CD4-positive, alpha-beta T cell (primary cell): ENCODE measurements at regions of chr14 and their contacts with region 1.

Region 1: DNA sequence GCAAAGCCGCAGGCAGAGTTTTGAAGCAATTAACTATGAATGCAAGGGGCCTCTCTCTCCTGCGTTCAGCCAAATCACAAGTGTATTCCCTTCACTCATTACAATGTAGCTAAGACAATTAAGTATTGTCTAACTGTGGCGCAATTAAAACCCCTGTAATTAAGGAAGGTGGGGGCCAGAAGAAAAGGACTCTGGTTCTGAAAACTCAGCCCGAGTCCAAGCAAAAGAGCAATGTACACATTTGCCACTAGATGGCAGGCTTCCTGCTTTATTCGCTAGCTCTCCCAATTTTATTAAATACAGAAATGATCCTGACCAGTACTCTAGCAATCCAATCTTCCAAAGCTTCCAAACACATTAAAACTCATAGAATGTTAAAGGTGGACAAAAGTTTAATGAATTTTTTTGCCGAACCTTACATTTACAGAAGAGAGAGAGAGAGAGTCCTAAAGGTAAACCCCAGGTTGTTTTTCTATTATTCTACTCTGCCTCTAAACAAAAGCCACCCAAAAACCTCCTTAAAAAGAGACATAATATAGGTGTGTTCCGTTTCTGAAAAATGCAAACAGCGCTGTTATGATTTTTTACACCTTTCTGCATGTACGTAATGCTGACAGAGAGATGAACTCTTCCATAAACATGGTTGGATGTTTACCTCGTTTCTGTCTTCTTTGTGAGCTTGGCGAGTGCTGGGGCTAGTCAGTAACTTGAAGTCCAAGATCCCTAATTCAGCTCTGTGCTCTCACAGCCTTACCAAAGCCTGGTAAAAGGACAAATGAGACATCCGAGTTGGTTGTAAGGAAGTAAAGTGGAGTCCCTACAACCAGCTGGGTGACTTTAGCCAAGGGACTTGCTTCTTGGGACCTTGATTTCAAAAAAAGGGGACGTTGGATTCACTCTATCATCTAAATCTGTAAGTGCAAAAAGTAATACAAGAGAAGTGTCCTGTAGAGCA is 50.9 kb upstream of the VASH1 start:
- DNase-seq: peak in 7 of 14 experiments; percentile 9 to 71 (median 42)
- ATAC-seq: peak; percentile 55
- H3K4me3 ChIP-seq: no peak overlapping the region
- H3K4me3 Mint-ChIP-seq: no peak overlapping the region
- H3K27ac ChIP-seq: no peak overlapping the region
- H3K27ac Mint-ChIP-seq: no peak overlapping the region
- H3K4me1 ChIP-seq: no peaks in the 10 kb centered on the region
- H3K4me1 Mint-ChIP-seq: no peaks in the 10 kb centered on the region
- H3K27me3 ChIP-seq: peaks cover 0 to 5% of the 10 kb centered on the region in 2 experiments
- H3K27me3 Mint-ChIP-seq: peaks cover 22% of the 10 kb centered on the region
- CTCF ChIP-seq: peak; percentile 89

Region 2: GRCh38 chr14:76736514-76736913 is 26.2 kb after region 1 on chr14:
- CTCF ChIA-PET with region 1: no interaction called
- POLR2A ChIA-PET with region 1: no interaction called
- intact Hi-C with region 1: no loop called
- DNase-seq: no peak
- ATAC-seq: no peak
- H3K4me3 ChIP-seq: no peak overlapping the region
- H3K4me3 Mint-ChIP-seq: no peak overlapping the region
- H3K27ac ChIP-seq: no peak overlapping the region
- H3K27ac Mint-ChIP-seq: no peak overlapping the region
- H3K4me1 ChIP-seq: no peaks in the 10 kb centered on the region
- H3K4me1 Mint-ChIP-seq: no peaks in the 10 kb centered on the region
- H3K27me3 ChIP-seq: no peaks in the 10 kb centered on the region
- H3K27me3 Mint-ChIP-seq: peaks cover 25% of the 10 kb centered on the region
- CTCF ChIP-seq: no peak

Region 3: DNA sequence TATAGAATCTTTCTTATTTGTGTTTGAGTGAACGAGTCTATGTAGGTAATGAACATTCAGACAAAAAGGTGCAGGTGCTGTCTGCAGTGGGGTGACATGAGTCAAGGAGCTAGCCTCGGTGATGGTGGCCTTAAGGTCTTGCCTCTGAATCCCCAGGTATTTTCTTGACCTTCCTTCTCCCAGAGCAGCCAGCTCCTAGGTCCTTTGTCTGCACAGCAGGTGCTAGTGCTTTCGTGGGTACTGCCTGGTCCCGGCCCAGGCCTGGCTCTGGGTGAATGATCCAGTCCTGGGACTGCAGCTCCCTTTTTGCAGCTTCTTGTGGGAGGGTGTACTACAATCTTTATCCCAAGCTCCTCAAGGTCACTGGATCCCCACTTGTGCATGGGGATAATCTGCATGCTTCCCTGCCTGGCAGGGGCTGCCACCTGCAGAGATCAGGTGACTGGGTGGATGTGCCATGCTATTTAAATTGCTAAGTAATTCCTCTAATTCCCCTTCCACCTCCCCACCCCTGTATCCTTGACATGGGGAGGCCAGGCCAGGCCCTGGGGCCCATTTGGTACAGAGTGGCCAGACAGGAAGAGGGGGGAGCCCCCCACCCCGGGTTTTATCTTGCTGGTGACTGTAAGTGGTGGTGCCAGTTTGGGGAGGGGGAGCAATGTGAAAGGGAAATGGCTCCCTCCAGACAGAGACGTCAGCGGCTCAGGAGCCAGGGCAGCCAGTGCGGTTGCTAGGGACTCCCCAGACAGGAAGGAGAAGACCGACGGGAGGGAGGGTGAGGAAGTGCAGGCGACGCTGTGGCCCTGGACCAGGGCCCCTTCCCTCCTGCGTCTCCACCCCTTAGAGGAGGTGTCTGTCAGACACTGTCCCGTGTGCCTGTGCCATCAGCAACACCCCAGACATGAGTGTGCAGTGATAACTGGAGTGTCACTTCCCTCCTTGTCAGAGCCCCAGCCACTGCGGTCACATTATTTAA is 57.6 kb after region 1 on chr14:
- CTCF ChIA-PET with region 1: interaction called, 4 read pairs
- POLR2A ChIA-PET with region 1: no interaction called
- intact Hi-C with region 1: loop called in 1 of 2 experiments (anchors 5 kb)
- DNase-seq: peak; percentile 37 to 98 (median 68)
- ATAC-seq: peak; percentile 96
- H3K4me3 ChIP-seq: peak overlapping the region; percentile 5
- H3K4me3 Mint-ChIP-seq: peak overlapping the region; percentile 43
- H3K27ac ChIP-seq: peak overlapping the region; percentile 70 to 78
- H3K27ac Mint-ChIP-seq: peak overlapping the region; percentile 94
- H3K4me1 ChIP-seq: peaks cover 38% of the 10 kb centered on the region
- H3K4me1 Mint-ChIP-seq: peaks cover 24% of the 10 kb centered on the region
- H3K27me3 ChIP-seq: peaks cover 0 to 2% of the 10 kb centered on the region in 2 experiments
- H3K27me3 Mint-ChIP-seq: no peaks in the 10 kb centered on the region
- CTCF ChIP-seq: no peak

Region 4: DNA sequence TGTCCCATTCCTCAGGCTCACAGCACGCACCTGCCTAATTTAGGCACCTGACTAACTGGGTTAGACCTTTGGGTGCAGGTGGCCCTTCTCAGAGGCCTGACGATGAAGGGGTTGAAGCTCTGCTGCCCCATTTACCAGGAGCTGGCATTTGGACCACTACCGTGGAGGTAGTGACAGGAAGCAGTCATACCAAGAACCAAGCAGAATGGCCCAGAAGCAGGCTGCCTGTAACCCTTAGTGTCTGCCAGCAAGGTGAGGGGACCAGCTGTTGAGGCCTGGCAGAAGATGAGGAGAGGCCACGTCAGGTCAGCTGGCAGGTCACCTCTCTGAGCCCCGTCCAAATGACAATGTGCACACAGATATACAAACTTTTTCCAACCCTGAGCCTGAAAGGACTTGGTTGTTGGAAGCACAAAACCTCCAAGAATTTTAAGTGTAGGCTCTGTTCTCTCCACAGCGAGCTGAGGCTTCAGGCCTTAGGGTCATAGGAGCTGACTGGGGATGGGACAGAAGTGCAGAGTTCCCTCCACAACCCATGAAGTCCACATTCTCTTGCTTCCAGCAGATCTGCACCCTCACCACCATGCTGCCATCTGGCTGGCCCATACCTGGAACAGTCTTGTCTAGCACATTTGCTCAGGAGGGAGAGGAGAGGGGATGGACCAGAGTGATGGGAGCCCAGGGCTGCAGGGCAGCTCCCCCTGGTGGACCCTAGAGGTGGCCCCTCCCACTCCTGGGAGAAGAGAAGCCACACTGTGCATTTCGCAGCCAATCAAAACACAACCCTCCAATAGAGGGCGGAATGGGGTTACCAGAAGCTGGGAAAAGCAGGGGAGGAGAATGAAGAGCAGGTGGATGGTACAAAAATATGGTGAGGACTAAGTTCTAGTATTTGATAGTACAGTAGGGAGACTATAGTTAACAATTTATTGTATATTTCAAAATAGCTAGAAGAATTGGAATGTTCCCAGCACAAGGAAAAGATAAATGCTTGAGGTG is 74.2 kb after region 1 on chr14:
- CTCF ChIA-PET with region 1: interaction called, 30 read pairs
- POLR2A ChIA-PET with region 1: no interaction called
- intact Hi-C with region 1: loop called (anchors 1 kb)
- DNase-seq: peak; percentile 33 to 86 (median 52)
- ATAC-seq: peak; percentile 97
- H3K4me3 ChIP-seq: no peak overlapping the region
- H3K4me3 Mint-ChIP-seq: no peak overlapping the region
- H3K27ac ChIP-seq: no peak overlapping the region
- H3K27ac Mint-ChIP-seq: peak overlapping the region; percentile 59
- H3K4me1 ChIP-seq: peaks cover 33% of the 10 kb centered on the region
- H3K4me1 Mint-ChIP-seq: peaks cover 23% of the 10 kb centered on the region
- H3K27me3 ChIP-seq: no peaks in the 10 kb centered on the region
- H3K27me3 Mint-ChIP-seq: no peaks in the 10 kb centered on the region
- CTCF ChIP-seq: peak; percentile 71

Region 5: DNA sequence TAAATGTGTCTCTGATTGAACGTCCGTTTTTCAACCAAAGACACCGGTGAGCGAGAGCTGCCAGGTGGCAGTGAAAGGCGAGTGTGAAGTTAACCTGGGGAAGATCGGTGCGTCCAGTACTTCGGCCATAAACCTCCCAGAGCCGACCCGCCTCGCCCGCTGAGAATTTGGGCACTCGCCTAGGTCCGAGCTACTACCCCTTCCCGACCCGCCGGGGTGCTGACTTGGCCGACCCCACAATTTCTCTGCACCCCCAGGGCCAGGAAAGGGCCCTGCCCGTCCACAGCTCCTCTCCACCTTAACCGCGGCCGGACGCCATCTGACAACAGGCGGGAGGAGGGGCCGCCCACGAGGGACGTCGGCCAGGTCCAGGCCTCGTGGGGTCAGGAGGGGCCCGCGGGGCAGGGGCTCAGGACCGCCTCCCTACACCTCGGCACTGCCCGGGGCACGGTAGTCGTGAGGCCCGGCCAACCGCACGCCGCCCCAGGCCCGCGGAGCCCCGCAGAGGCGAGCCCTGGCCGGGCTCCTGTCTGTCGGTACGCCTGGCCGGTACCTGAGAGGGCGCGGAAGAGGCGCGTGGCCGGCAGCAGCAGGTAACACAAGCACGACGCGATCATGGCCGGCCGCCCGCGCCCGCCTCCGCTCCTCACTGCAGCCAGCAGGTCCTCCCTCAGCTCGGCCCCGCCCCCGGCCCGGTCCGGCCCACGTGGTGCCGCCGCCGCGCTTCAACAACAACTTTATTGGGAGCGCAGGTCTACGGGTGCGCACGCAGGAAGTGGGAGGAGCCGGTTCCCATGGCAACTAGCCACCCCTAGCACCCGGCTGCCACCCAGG is 102.1 kb after region 1 on chr14 and contains the start of gene ANGEL1:
- CTCF ChIA-PET with region 1: interaction called, 6 read pairs
- POLR2A ChIA-PET with region 1: no interaction called
- intact Hi-C with region 1: loop called in 1 of 2 experiments (anchors 1 kb)
- DNase-seq: peak; percentile 94 to 99 (median 98)
- ATAC-seq: peak; percentile 90
- H3K4me3 ChIP-seq: peak within 1 kb of the TSS; percentile 84
- H3K4me3 Mint-ChIP-seq: peak within 1 kb of the TSS; percentile 97
- H3K27ac ChIP-seq: peak within 1 kb of the TSS; percentile 67 to 85
- H3K27ac Mint-ChIP-seq: peak within 1 kb of the TSS; percentile 96
- H3K4me1 ChIP-seq: peaks cover 28% of the 10 kb centered on the region
- H3K4me1 Mint-ChIP-seq: peaks cover 35% of the 10 kb centered on the region
- H3K27me3 ChIP-seq: no peaks in the 10 kb centered on the region
- H3K27me3 Mint-ChIP-seq: no peaks in the 10 kb centered on the region
- CTCF ChIP-seq: no peak
- total RNA-seq, gene ANGEL1: 10.1 to 10.4 TPM

Region 6: DNA sequence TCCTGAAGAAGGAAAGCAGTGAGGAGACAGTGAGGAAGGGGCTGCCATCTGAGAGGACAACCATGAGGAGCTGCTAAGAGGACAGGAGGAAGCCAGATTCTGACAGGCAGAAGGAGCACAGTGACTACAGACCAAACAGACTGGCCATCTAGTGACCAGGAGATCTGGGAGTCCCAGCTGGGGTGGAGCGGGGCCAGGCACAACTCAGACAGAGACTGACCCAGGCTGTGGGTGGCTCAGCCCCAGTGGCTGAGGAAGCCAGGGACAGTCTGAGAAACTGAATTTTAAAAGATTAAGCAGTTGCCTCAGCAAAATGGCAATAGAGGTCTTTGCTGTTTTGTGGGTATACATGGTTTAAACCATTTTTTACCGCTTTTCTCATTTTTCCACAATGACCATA is 144.7 kb after region 1 on chr14:
- CTCF ChIA-PET with region 1: no interaction called
- POLR2A ChIA-PET with region 1: no interaction called
- intact Hi-C with region 1: loop called in 1 of 2 experiments (anchors 10 kb)
- DNase-seq: no peak
- ATAC-seq: no peak
- H3K4me3 ChIP-seq: no peak overlapping the region
- H3K4me3 Mint-ChIP-seq: no peak overlapping the region
- H3K27ac ChIP-seq: no peak overlapping the region
- H3K27ac Mint-ChIP-seq: no peak overlapping the region
- H3K4me1 ChIP-seq: no peaks in the 10 kb centered on the region
- H3K4me1 Mint-ChIP-seq: no peaks in the 10 kb centered on the region
- H3K27me3 ChIP-seq: peaks cover 0 to 5% of the 10 kb centered on the region in 2 experiments
- H3K27me3 Mint-ChIP-seq: peaks cover 10% of the 10 kb centered on the region
- CTCF ChIP-seq: no peak

Region 7: GRCh38 chr14:77014004-77014604 is 303.8 kb after region 1 on chr14:
- CTCF ChIA-PET with region 1: no interaction called
- POLR2A ChIA-PET with region 1: no interaction called
- intact Hi-C with region 1: no loop called
- DNase-seq: no peak
- ATAC-seq: no peak
- H3K4me3 ChIP-seq: no peak overlapping the region
- H3K4me3 Mint-ChIP-seq: no peak overlapping the region
- H3K27ac ChIP-seq: no peak overlapping the region
- H3K27ac Mint-ChIP-seq: no peak overlapping the region
- H3K4me1 ChIP-seq: peaks cover 16% of the 10 kb centered on the region
- H3K4me1 Mint-ChIP-seq: peaks cover 23% of the 10 kb centered on the region
- H3K27me3 ChIP-seq: no peaks in the 10 kb centered on the region
- H3K27me3 Mint-ChIP-seq: no peaks in the 10 kb centered on the region
- CTCF ChIP-seq: no peak

Region 8: DNA sequence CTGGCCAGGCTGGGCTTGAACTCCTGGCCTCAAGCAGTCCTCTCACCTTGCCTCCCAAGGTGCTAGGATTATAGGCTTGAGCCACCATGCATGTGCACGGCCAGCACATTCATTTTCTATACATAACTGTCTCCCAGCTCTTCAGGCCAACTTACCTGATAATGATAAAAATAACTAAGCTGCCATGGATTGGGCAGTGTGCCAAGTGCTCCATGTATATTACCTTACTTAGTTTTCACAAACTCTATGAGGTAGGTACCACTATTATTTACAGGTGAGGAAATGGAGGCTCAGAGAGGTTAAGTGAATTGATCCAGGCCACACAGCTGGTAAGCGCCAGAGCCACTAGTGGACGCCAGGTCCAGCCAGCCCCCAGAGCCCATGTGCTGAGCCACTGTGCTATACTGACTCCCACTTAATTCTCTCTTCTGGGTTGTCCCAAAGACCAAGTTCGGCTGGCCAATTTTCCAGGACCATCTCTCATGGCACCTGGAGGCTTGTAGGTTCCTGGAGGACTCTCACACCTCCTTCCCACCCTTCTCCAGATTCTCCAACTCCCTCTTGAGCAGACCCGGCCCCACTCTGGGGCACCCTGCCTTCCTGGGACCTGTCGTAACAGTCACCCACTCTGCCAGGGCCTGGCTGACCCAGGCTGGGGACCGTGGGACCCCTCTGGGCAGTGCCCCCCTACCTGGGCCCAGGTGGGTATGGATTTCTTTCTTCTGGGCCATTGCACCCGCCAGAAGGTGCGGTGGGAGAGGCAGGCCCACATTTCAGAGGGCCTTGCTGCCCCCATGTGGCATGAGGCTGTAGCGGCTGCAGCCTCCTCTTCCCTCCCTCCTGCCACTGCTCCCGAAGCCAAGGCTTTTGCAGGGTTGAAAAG is 357.5 kb after region 1 on chr14:
- CTCF ChIA-PET with region 1: interaction called, 4 read pairs
- POLR2A ChIA-PET with region 1: no interaction called
- intact Hi-C with region 1: loop called (anchors 1 to 2 kb)
- DNase-seq: peak; percentile 33 to 77 (median 54)
- ATAC-seq: peak; percentile 72
- H3K4me3 ChIP-seq: no peak overlapping the region
- H3K4me3 Mint-ChIP-seq: no peak overlapping the region
- H3K27ac ChIP-seq: no peak overlapping the region
- H3K27ac Mint-ChIP-seq: no peak overlapping the region
- H3K4me1 ChIP-seq: peaks cover 14% of the 10 kb centered on the region
- H3K4me1 Mint-ChIP-seq: no peaks in the 10 kb centered on the region
- H3K27me3 ChIP-seq: no peaks in the 10 kb centered on the region
- H3K27me3 Mint-ChIP-seq: peaks cover 4% of the 10 kb centered on the region
- CTCF ChIP-seq: peak; percentile 76

Region 9: DNA sequence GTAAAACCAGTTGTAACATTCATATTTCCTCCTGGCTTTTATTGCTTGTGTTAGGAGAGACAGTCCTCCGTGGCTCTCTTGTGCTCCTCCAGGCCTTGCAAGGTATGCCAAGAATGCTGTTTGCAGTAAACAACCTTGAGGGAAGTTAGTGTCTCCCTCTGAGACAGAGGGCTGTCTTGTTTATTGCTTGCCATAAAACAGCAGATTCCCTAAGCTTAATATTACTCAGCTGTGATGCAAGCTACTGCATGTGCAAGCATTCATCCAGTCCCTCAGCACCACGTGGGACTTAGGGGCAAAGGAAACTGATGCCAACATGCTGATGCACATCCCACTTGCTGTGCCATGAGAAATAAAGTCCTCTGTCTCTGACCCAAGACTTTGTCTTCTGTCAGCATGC is 603.7 kb after region 1 on chr14:
- CTCF ChIA-PET with region 1: no interaction called
- POLR2A ChIA-PET with region 1: no interaction called
- intact Hi-C with region 1: loop called in 1 of 2 experiments (anchors 10 kb)
- DNase-seq: no peak
- ATAC-seq: no peak
- H3K4me3 ChIP-seq: no peak overlapping the region
- H3K4me3 Mint-ChIP-seq: no peak overlapping the region
- H3K27ac ChIP-seq: no peak overlapping the region
- H3K27ac Mint-ChIP-seq: no peak overlapping the region
- H3K4me1 ChIP-seq: peaks cover 7% of the 10 kb centered on the region
- H3K4me1 Mint-ChIP-seq: peaks cover 5% of the 10 kb centered on the region
- H3K27me3 ChIP-seq: no peaks in the 10 kb centered on the region
- H3K27me3 Mint-ChIP-seq: no peaks in the 10 kb centered on the region
- CTCF ChIP-seq: no peak